ENCODE measurements at regions of chr1 and their contacts with region 1.

Region 1: DNA sequence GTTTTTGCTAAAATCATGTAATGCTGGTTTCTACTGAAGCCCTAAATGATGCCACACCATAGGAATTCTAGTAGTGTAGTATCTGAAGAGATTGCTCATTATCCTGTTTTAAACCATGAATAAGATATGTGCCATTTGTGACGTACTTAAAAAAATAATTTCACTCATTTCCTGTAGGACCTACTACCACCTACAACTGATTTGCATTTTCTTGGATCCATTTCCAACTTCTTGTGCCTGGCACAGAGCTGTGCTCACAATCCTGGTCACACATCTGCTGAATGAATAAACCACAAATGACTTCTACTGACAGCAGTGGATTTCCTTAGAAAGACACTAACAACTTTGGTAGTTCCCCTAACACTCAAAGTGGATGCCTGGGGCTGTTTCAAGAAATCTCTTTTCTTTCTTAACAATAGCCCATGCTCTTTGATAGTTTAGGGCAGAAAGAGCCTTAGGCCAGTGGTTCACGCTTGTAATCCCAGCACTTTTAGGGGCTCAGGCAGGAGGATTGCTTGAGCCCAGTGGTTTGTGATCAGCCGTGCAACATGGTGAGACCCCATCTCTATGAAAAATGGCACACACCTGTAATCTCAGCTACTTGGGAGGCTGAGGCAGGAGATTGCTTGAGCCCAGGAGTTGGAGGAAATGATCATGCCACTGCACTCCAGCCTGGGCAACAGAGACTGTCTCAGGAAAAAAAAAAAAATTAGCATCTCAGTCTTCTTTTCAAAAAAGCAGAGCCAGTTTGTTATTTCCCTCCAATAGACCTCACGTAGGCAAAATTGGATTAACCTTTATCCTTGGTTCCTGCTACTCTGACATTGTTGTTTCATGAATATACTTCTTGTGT is 13.0 kb upstream of the BATF3 start:
- DNase-seq: no peak
- H3K4me3 ChIP-seq: no peak overlapping the region
- H3K27ac ChIP-seq: no peak overlapping the region
- H3K4me1 ChIP-seq: no peaks in the 10 kb centered on the region
- CTCF ChIP-seq: no peak

Region 2: GRCh38 chr1:212630158-212630900 is 82.3 kb before region 1 on chr1:
- CTCF ChIA-PET with region 1: no interaction called
- POLR2A ChIA-PET with region 1: no interaction called
- intact Hi-C with region 1: no loop called
- DNase-seq: peak; percentile 69
- H3K4me3 ChIP-seq: no peak overlapping the region
- H3K27ac ChIP-seq: no peak overlapping the region
- H3K4me1 ChIP-seq: no peaks in the 10 kb centered on the region
- CTCF ChIP-seq: peak; percentile 79

Region 3: GRCh38 chr1:212671342-212672031 is 41.2 kb before region 1 on chr1:
- CTCF ChIA-PET with region 1: no interaction called
- POLR2A ChIA-PET with region 1: interaction called, 11 read pairs
- intact Hi-C with region 1: no loop called
- DNase-seq: peak; percentile 29
- H3K4me3 ChIP-seq: no peak overlapping the region
- H3K27ac ChIP-seq: no peak overlapping the region
- H3K4me1 ChIP-seq: peaks cover 17% of the 10 kb centered on the region
- CTCF ChIP-seq: no peak

Region 4: GRCh38 chr1:212731630-212732029 is 19.0 kb after region 1 on chr1:
- CTCF ChIA-PET with region 1: no interaction called
- POLR2A ChIA-PET with region 1: no interaction called
- intact Hi-C with region 1: no loop called
- DNase-seq: no peak
- H3K4me3 ChIP-seq: no peak overlapping the region
- H3K27ac ChIP-seq: no peak overlapping the region
- H3K4me1 ChIP-seq: no peaks in the 10 kb centered on the region
- CTCF ChIP-seq: no peak

Measured in OCI-LY7 (cell line).